Vagina (tissue), 2 donors: ENCODE measurements at regions of chr2 and their contacts with region 1.

Region 1: DNA sequence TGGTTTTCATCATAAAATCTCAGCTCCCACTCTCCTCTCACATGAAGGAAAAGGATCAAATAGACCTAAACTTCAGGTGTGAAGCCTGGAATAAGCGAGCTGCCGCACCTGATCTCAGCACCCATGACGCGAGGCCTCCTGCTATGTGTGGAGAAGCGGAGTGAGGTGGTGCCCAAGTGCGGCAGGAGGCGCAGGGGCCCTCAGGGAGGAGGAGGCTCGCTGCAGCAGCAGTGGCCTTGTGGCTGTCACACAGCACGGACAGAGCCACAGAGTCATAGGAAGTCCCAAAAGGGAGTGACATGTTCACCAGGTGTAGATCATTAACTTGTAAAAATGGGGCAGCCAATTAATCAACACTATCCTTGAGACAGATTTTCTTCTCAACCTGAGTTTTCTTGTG is 9.1 kb downstream of the SCLY start:
- DNase-seq: no peak
- H3K4me3 ChIP-seq: no peak overlapping the region
- H3K27ac ChIP-seq: no peak overlapping the region
- H3K4me1 ChIP-seq: no peaks in the 10 kb centered on the region
- H3K27me3 ChIP-seq: no peaks in the 10 kb centered on the region
- CTCF ChIP-seq: no peak
- POLR2A ChIP-seq: no peak

Region 2: GRCh38 chr2:238106686-238107524 is 37.0 kb after region 1 on chr2:
- intact Hi-C with region 1: no loop called
- DNase-seq: no peak
- H3K4me3 ChIP-seq: no peak overlapping the region
- H3K27ac ChIP-seq: no peak overlapping the region
- H3K4me1 ChIP-seq: no peaks in the 10 kb centered on the region
- H3K27me3 ChIP-seq: no peaks in the 10 kb centered on the region
- CTCF ChIP-seq: no peak
- POLR2A ChIP-seq: no peak

Region 3: DNA sequence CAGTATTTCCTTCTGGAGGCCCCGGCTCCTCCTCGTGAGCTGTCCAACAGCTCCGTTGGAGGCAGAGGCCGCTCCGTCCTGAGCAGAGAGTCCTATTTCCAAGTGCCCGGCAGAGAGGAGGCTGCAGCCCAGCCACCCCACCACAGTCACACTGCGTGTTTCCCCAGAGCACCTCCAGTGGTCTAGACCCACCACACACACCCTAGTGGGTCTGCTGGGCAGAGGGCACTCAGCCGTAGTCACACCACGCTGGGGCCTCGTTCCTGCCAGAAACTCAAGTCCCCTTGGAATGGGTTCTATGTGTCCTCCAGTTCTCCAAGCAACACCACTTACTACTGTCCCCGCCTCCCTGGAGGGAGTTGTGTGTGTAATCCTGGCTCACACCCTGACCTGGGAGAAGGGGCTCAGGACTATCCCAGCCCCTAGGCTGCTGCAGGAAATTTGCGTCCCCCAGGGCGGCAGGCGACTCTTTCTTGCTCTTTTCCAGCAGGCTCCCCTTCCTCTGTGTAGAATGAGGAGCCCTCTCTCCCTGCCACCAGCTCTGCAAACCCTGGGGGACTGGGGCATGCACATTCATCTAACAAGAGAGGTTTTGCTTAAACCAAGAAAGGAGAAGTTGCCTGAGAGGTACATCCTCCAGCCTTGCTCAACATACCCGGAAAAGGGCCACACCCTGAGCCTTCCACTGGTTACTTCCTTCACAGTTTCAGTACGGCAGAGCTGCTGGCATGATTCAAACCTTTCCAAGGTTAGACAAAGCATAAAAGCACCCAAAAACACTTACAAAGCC is 1841.2 kb after region 1 on chr2:
- intact Hi-C with region 1: loop called (anchors 5 kb)
- DNase-seq: peak; percentile 81 to 82
- H3K4me3 ChIP-seq: no peak overlapping the region
- H3K27ac ChIP-seq: no peak overlapping the region
- H3K4me1 ChIP-seq: peaks cover 17% of the 10 kb centered on the region
- H3K27me3 ChIP-seq: no peaks in the 10 kb centered on the region
- CTCF ChIP-seq: no peak
- POLR2A ChIP-seq: no peak